Activated CD4-positive, alpha-beta memory T cell treated with anti-CD3 and anti-CD28 coated beads for 36 hours (primary cell): ENCODE measurements at regions of chr5 and their contacts with region 1.

Region 1: GRCh38 chr5:6827526-6828219 is 114.4 kb downstream of the TENT4A start:
- DNase-seq: peak; percentile 68
- H3K4me3 Mint-ChIP-seq: peak overlapping the region; percentile 50
- H3K27ac Mint-ChIP-seq: peak overlapping the region; percentile 55
- H3K4me1 Mint-ChIP-seq: peaks cover 52% of the 10 kb centered on the region
- H3K27me3 Mint-ChIP-seq: peaks cover 15% of the 10 kb centered on the region

Region 2: DNA sequence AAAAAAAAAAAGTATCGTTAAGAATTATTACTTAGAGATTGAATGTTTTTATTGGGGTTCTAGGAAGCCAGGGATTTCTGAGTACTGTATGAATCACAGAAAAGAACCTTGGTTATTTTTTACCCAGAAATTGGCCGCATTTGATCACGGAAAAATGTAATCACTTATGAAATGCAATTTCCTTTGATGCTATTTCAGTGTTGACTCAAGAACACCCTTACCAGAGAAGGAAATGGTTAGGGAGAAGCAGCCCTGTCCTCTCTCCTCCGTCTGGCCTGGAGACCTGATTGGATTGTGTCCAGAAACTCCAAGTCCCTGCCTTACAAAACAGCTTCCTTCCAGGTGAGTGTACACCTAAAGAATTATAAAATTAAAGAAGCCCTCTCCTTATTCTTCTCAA is 566.0 kb before region 1 on chr5:
- CTCF ChIA-PET with region 1: no interaction called
- POLR2A ChIA-PET with region 1: no interaction called
- intact Hi-C with region 1: loop called (anchors 5 kb)
- DNase-seq: no peak
- H3K4me3 Mint-ChIP-seq: no peak overlapping the region
- H3K27ac Mint-ChIP-seq: peak overlapping the region; percentile 75
- H3K4me1 Mint-ChIP-seq: peaks cover 15% of the 10 kb centered on the region
- H3K27me3 Mint-ChIP-seq: peaks cover 2% of the 10 kb centered on the region

Region 3: DNA sequence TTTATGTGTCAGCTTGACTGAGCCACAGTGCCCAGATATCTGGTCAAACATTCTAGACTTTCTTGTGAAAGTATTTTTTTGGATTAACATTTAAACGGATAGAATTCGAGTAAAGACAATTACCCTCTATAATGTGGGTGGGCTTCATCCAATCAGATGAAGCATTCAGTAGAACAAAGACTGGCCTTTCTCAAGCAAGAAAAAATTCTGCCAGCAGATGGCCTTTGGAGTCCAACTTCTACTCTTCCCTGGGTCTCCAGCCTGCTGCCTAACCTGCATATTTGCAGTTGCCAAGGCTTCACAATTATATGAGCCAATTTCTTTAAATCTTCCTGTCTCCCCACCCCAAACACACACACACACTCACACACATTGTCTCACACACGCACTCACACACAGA is 535.7 kb before region 1 on chr5:
- CTCF ChIA-PET with region 1: no interaction called
- POLR2A ChIA-PET with region 1: no interaction called
- intact Hi-C with region 1: no loop called
- DNase-seq: no peak
- H3K4me3 Mint-ChIP-seq: no peak overlapping the region
- H3K27ac Mint-ChIP-seq: no peak overlapping the region
- H3K4me1 Mint-ChIP-seq: no peaks in the 10 kb centered on the region
- H3K27me3 Mint-ChIP-seq: no peaks in the 10 kb centered on the region

Region 4: DNA sequence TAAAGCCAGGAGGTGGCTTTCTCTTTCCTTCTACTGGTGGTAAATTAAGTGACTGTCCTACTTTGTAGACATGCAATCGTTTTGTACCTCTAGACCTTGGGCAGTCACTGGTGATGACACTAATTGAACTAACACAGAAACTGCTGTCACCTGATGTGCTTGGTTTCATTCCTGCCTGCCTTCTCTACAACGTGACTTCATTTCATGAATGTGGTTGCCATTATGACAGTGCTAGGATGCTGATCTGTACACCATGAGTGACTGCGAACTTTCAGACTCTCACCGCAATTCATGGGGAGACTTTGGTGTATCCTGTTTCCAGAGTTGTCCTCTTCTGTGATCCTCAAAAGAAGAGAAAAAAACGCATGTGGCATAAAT is 331.5 kb before region 1 on chr5:
- CTCF ChIA-PET with region 1: no interaction called
- POLR2A ChIA-PET with region 1: no interaction called
- intact Hi-C with region 1: loop called (anchors 1 kb)
- DNase-seq: peak; percentile 53
- H3K4me3 Mint-ChIP-seq: no peak overlapping the region
- H3K27ac Mint-ChIP-seq: no peak overlapping the region
- H3K4me1 Mint-ChIP-seq: peaks cover 12% of the 10 kb centered on the region
- H3K27me3 Mint-ChIP-seq: peaks cover 20% of the 10 kb centered on the region

Region 5: GRCh38 chr5:6737023-6737941 is 90.4 kb before region 1 on chr5:
- CTCF ChIA-PET with region 1: no interaction called
- POLR2A ChIA-PET with region 1: no interaction called
- intact Hi-C with region 1: loop called (anchors 1 kb)
- DNase-seq: peak; percentile 32
- H3K4me3 Mint-ChIP-seq: peak overlapping the region; percentile 10
- H3K27ac Mint-ChIP-seq: peak overlapping the region; percentile 84
- H3K4me1 Mint-ChIP-seq: peaks cover 54% of the 10 kb centered on the region
- H3K27me3 Mint-ChIP-seq: no peaks in the 10 kb centered on the region

Region 6: DNA sequence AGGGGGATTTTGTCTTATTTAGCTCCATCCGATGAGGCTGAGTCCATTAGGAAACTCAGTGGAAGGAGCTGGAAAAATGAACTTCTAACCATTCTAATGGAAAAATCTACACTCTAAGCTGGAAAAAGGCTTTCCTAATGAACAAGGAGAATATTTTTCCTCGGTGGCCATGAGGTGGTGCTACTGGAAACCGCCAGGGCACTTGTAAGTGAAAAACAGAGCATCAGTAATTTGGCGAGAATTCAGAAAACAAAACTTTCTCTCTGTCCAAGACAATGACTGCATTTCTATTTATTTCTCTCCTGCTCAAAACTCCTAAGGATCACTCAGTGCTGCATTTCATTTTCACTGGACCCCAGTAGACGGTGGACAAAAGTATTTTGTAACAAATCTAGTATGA is 123.2 kb after region 1 on chr5:
- CTCF ChIA-PET with region 1: interaction called, 3 read pairs
- POLR2A ChIA-PET with region 1: no interaction called
- intact Hi-C with region 1: loop called (anchors 2 kb)
- DNase-seq: no peak
- H3K4me3 Mint-ChIP-seq: no peak overlapping the region
- H3K27ac Mint-ChIP-seq: no peak overlapping the region
- H3K4me1 Mint-ChIP-seq: no peaks in the 10 kb centered on the region
- H3K27me3 Mint-ChIP-seq: peaks cover 12% of the 10 kb centered on the region

Region 7: GRCh38 chr5:7878381-7878873 is 1050.8 kb after region 1 on chr5:
- CTCF ChIA-PET with region 1: no interaction called
- POLR2A ChIA-PET with region 1: no interaction called
- intact Hi-C with region 1: loop called (anchors 1 kb)
- DNase-seq: peak; percentile 33
- H3K4me3 Mint-ChIP-seq: no peak overlapping the region
- H3K27ac Mint-ChIP-seq: no peak overlapping the region
- H3K4me1 Mint-ChIP-seq: peaks cover 59% of the 10 kb centered on the region
- H3K27me3 Mint-ChIP-seq: no peaks in the 10 kb centered on the region

Region 8: GRCh38 chr5:8188874-8189565 is 1361.3 kb after region 1 on chr5:
- CTCF ChIA-PET with region 1: no interaction called
- POLR2A ChIA-PET with region 1: no interaction called
- intact Hi-C with region 1: no loop called
- DNase-seq: no peak
- H3K4me3 Mint-ChIP-seq: no peak overlapping the region
- H3K27ac Mint-ChIP-seq: no peak overlapping the region
- H3K4me1 Mint-ChIP-seq: no peaks in the 10 kb centered on the region
- H3K27me3 Mint-ChIP-seq: no peaks in the 10 kb centered on the region